CD4-positive, alpha-beta T cell (primary cell): ENCODE measurements at regions of chr9 and their contacts with region 1.

Region 1: DNA sequence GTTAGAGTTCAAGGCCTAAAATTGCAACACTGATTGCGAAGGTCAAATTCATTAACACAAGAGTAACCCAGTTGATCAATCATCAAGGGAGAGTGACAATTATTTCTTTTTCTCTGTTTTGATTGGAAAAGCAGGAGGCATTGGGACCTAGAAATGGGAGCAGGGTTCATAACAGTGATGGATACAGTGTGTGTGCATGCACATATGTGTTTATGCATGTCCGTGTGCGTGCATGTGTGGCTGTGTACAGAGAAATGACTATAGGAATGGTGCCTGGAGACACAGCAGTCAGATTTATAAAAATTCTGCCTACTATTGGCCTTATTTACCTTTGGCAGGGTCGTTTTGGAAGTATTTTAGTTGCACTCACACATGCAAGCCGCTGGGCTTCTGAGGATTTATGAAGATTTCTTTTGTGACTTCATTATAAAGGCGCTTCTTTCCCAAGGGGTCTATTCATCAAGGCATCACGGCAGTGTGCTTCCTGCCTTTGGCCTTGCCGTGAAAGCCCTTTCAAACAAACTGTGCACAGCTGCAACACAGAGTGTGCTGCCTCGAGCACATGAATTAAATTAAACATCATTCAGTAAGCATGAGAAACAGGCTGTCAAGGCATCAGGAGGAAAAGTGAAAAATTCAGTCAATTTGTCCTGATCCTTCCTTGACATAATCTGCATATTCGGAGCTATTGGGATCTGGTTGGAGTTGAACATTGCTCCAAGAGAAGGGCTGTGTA is 122.8 kb upstream of the PUM3 start:
- DNase-seq: no peak
- ATAC-seq: no peak
- H3K4me3 ChIP-seq: no peak overlapping the region
- H3K4me3 Mint-ChIP-seq: no peak overlapping the region
- H3K27ac ChIP-seq: no peak overlapping the region
- H3K27ac Mint-ChIP-seq: no peak overlapping the region
- H3K4me1 ChIP-seq: no peaks in the 10 kb centered on the region
- H3K4me1 Mint-ChIP-seq: no peaks in the 10 kb centered on the region
- H3K27me3 ChIP-seq: no peaks in the 10 kb centered on the region
- H3K27me3 Mint-ChIP-seq: peaks cover 16% of the 10 kb centered on the region
- CTCF ChIP-seq: no peak

Region 2: GRCh38 chr9:3001311-3001710 is 34.6 kb after region 1 on chr9:
- CTCF ChIA-PET with region 1: no interaction called
- POLR2A ChIA-PET with region 1: no interaction called
- intact Hi-C with region 1: loop called in 1 of 2 experiments (anchors 2 kb)
- DNase-seq: no peak
- ATAC-seq: no peak
- H3K4me3 ChIP-seq: no peak overlapping the region
- H3K4me3 Mint-ChIP-seq: no peak overlapping the region
- H3K27ac ChIP-seq: no peak overlapping the region
- H3K27ac Mint-ChIP-seq: no peak overlapping the region
- H3K4me1 ChIP-seq: no peaks in the 10 kb centered on the region
- H3K4me1 Mint-ChIP-seq: no peaks in the 10 kb centered on the region
- H3K27me3 ChIP-seq: peaks cover 0 to 3% of the 10 kb centered on the region in 2 experiments
- H3K27me3 Mint-ChIP-seq: peaks cover 18% of the 10 kb centered on the region
- CTCF ChIP-seq: no peak